Caco-2 (cell line): ENCODE measurements at regions of chr15 and their contacts with region 1.

Region 1: DNA sequence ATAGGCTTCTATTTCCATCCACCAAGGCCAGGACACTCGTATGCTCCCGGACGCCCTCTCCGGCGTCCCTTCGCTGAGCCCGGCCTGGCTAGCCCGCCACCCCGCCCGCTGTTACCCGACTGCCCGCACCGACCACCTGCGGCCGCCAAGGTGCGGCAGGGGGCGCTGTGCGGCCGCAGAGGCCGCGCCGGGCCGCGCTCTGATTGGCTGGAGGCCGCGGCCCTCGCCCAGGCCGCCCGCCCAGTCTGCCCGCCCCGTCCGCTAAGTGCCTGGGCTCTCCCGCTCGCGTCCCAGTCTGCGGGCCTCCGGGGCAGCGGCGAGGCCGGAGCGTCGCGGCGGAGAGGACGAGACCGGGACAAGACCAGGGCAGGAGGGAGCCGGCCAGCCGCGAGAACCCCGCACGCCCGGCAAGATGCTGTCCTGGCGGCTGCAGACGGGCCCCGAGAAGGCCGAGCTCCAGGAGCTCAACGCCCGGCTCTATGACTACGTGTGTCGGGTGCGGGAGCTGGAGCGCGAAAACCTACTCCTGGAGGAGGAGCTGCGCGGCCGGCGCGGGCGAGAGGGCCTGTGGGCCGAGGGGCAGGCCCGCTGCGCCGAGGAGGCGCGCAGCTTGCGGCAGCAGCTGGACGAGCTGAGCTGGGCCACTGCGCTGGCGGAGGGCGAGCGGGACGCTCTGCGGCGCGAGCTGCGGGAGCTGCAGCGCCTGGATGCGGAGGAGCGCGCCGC is at the start of gene SYNM:
- DNase-seq: peak; percentile 73 to 88
- H3K4me3 ChIP-seq: peak within 1 kb of the TSS; percentile 46
- H3K4me3 Mint-ChIP-seq: peak within 1 kb of the TSS; percentile 76
- H3K27ac Mint-ChIP-seq: no peak within 1 kb of the TSS
- H3K4me1 ChIP-seq: no peaks in the 10 kb centered on the region
- H3K4me1 Mint-ChIP-seq: no peaks in the 10 kb centered on the region
- H3K27me3 ChIP-seq: no peaks in the 10 kb centered on the region; the same call in 1 of the 2 replicates
- H3K27me3 Mint-ChIP-seq: peaks cover 3% of the 10 kb centered on the region
- CTCF ChIP-seq: peak; percentile 53 to 73
- total RNA-seq, gene SYNM: 6.0 and 6.1 TPM in 2 replicates

Region 2: DNA sequence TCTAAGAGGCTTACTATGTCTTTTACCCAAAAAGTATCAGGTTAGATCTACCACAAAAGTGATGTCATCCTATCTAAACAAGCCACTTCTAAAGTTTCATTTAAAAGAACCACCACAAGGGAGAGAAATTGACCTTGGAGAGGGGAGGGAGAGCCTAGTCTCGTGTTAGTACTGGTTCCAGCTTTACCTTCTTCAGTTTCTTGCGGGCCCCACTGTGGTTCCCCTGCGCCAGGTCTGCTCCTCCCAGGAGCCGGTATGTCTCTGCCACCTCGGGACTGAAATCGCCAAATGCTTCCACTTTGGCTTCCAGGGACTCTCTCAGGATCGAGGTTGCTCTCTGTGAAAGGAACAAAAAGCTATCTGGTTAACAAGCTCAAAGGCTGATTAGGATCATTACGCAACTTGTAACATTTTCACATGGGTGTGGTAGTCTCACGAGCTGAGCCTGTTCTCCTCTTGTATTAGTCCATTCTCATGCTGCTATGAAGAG is 51.1 kb after region 1 on chr15:
- CTCF ChIA-PET with region 1: interaction called, 5 read pairs
- POLR2A ChIA-PET with region 1: no interaction called
- intact Hi-C with region 1: loop called (anchors 2 kb)
- DNase-seq: peak; percentile 44 to 51
- H3K4me3 ChIP-seq: no peak overlapping the region
- H3K4me3 Mint-ChIP-seq: peak overlapping the region; percentile 32
- H3K27ac Mint-ChIP-seq: no peak overlapping the region
- H3K4me1 ChIP-seq: peaks cover 39% of the 10 kb centered on the region
- H3K4me1 Mint-ChIP-seq: peaks cover 22% of the 10 kb centered on the region
- H3K27me3 ChIP-seq: no peaks in the 10 kb centered on the region
- H3K27me3 Mint-ChIP-seq: no peaks in the 10 kb centered on the region
- CTCF ChIP-seq: no peak

Region 3: DNA sequence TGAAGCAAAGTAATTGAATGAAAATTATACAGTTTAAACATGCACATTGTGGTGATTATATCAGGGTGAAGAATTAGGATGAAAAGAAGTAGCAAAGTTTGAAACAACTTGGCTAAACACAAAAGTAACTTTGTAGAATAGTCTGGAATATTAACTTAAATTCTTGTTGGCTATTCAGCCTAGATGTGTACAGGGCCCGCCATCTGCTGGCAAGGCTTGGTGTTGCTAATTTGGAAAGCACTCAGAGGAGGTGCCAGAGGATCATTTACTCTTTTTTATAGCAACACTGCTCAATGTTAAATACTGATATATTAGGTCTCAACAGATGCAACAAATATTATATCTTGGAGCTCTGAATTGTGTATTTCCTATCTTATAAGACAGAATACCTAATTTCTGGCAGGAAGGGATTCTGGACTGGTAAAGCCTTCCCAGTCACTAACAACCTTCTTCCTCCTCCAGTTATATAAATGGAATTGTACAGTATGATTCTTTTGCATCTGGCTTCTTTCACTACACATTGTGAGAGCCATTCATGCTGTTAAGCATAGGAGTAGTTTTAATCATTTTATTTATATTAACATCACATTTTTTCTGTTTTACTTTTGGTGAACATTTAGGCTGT is 108.3 kb after region 1 on chr15:
- CTCF ChIA-PET with region 1: interaction called, 9 read pairs
- POLR2A ChIA-PET with region 1: no interaction called
- intact Hi-C with region 1: loop called (anchors 1 kb)
- DNase-seq: peak; percentile 66 to 74
- H3K4me3 ChIP-seq: no peak overlapping the region
- H3K4me3 Mint-ChIP-seq: no peak overlapping the region
- H3K27ac Mint-ChIP-seq: no peak overlapping the region
- H3K4me1 ChIP-seq: no peaks in the 10 kb centered on the region
- H3K4me1 Mint-ChIP-seq: peaks cover 7% of the 10 kb centered on the region
- H3K27me3 ChIP-seq: no peaks in the 10 kb centered on the region
- H3K27me3 Mint-ChIP-seq: no peaks in the 10 kb centered on the region
- CTCF ChIP-seq: peak; percentile 77 to 79

Region 4: DNA sequence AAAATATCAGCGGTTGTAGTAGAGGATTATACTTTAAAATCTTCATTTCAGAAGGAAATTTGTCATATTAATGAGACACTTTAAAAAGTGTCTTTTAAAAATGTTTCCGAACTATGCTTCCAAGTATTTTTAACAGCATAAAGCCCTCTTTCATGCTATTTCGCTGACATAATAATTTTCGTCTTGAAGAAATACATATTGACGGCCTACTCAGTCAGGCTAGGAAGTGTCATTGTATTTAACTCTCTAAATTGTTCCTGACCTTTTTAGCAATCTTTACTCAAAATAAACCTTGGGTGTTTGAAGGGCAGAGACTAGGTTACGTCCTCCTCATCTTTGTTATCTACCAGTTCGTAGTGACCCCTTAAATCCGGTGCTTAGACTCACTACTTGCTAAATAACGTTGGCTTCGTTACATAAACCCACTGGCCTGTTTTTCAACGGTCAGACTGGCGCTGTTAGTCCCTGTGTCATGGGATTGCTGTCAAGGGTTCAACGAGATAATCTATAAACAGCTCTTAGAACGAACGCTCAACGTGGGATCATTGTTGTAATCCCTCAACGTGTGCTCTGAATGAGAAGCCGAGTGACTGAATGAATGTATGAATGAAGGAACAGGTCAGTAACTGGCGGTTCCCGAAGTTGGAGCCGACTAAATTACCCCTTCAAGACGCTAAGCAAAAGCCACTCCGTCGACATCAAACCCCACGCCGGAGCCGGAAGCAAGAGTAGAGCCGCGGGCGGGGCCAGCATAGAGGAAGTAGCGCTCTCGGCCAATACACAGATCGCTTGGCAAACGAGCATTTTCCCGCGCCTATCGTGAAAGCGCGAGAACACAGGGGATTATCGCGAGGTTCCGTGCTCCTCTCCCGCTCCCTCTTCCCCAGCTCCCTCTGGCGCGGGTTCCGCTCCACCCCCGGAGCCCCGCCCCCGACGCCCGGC is 145.8 kb after region 1 on chr15:
- CTCF ChIA-PET with region 1: no interaction called
- POLR2A ChIA-PET with region 1: interaction called, 5 read pairs
- intact Hi-C with region 1: loop called (anchors 1 kb)
- DNase-seq: peak; percentile 97 to 98
- H3K4me3 ChIP-seq: peak overlapping the region; percentile 84
- H3K4me3 Mint-ChIP-seq: no peak overlapping the region
- H3K27ac Mint-ChIP-seq: peak overlapping the region; percentile 92
- H3K4me1 ChIP-seq: no peaks in the 10 kb centered on the region; the same call in 1 of the 2 replicates
- H3K4me1 Mint-ChIP-seq: no peaks in the 10 kb centered on the region
- H3K27me3 ChIP-seq: no peaks in the 10 kb centered on the region
- H3K27me3 Mint-ChIP-seq: no peaks in the 10 kb centered on the region
- CTCF ChIP-seq: no peak